Caco-2 (cell line): ENCODE measurements at regions of chr22 and their contacts with region 1.

Region 1: DNA sequence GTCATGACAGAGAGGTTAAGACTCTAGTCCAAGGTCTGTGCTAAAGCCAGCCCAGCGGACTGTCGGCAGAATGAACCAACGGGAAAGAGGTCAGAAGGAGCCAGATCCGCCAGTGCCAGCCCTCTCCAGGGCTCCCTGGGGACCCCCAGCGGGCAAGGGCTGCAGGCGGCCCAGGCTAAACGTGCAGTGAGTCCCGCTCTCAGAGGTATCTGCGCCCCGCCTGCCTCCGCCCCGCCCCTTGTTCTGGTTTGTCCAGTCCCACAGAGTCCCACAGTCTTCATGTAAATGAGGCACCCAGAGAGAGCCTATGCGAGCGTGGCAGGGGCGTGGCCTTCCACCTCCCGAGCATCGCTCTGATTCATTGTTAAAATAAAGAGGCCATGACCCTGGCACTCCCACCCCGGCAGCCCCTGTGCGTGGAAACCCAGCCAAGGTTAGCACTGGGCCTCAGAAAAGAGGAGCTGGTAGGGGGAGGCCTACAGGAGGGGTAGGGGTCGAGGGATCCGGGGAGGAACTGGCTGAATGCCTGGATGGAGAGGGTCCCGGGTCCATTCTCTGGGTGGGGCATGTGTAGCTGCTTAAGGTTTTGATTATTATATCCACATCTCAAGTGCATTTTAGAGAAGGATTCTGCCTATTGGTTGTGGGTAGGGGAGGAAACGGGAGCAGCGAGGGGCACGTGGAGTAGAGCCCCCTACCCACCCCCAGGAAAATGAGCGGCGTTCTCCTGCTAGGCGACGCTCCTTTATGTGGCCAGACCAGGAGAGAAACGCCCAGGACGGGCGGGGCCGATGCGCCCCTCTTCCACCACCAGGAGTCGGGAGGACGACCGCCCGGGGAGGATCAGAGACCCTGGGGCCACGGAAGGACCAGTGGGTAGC is at the start of gene TRIOBP:
- DNase-seq: peak; percentile 98
- H3K4me3 ChIP-seq: peak within 1 kb of the TSS; percentile 20
- H3K4me3 Mint-ChIP-seq: peak within 1 kb of the TSS; percentile 55
- H3K27ac Mint-ChIP-seq: peak within 1 kb of the TSS; percentile 62
- H3K4me1 ChIP-seq: peaks cover 13% of the 10 kb centered on the region; the same call in 1 of the 2 replicates
- H3K4me1 Mint-ChIP-seq: peaks cover 13% of the 10 kb centered on the region
- H3K27me3 ChIP-seq: no peaks in the 10 kb centered on the region
- H3K27me3 Mint-ChIP-seq: no peaks in the 10 kb centered on the region
- CTCF ChIP-seq: peak; percentile 51 to 80
- total RNA-seq, gene TRIOBP: 30.7 and 38.4 TPM in 2 replicates

Region 2: GRCh38 chr22:37676736-37677492 is 20.0 kb before region 1 on chr22:
- CTCF ChIA-PET with region 1: interaction called, 10 read pairs
- POLR2A ChIA-PET with region 1: no interaction called
- intact Hi-C with region 1: no loop called
- DNase-seq: peak; percentile 84 to 88
- H3K4me3 ChIP-seq: peak overlapping the region; percentile 53
- H3K4me3 Mint-ChIP-seq: peak overlapping the region; percentile 79
- H3K27ac Mint-ChIP-seq: peak overlapping the region; percentile 65
- H3K4me1 ChIP-seq: peaks cover 9% of the 10 kb centered on the region; the same call in 1 of the 2 replicates
- H3K4me1 Mint-ChIP-seq: peaks cover 7% of the 10 kb centered on the region
- H3K27me3 ChIP-seq: no peaks in the 10 kb centered on the region
- H3K27me3 Mint-ChIP-seq: no peaks in the 10 kb centered on the region
- CTCF ChIP-seq: no peak

Region 3: GRCh38 chr22:37686002-37686982 is 10.6 kb before region 1 on chr22 and contains the start of gene NOL12:
- CTCF ChIA-PET with region 1: interaction called, 10 read pairs
- POLR2A ChIA-PET with region 1: interaction called, 6 read pairs
- intact Hi-C with region 1: loop called (anchors 1 kb)
- DNase-seq: peak; percentile 85
- H3K4me3 ChIP-seq: peak within 1 kb of the TSS; percentile 97
- H3K4me3 Mint-ChIP-seq: peak within 1 kb of the TSS; percentile 99
- H3K27ac Mint-ChIP-seq: peak within 1 kb of the TSS; percentile 95
- H3K4me1 ChIP-seq: peaks cover 16% of the 10 kb centered on the region; the same call in 1 of the 2 replicates
- H3K4me1 Mint-ChIP-seq: no peaks in the 10 kb centered on the region
- H3K27me3 ChIP-seq: no peaks in the 10 kb centered on the region; the same call in 1 of the 2 replicates
- H3K27me3 Mint-ChIP-seq: no peaks in the 10 kb centered on the region
- CTCF ChIP-seq: no peak
- total RNA-seq, gene NOL12: 20.2 and 22.3 TPM in 2 replicates

Region 4: DNA sequence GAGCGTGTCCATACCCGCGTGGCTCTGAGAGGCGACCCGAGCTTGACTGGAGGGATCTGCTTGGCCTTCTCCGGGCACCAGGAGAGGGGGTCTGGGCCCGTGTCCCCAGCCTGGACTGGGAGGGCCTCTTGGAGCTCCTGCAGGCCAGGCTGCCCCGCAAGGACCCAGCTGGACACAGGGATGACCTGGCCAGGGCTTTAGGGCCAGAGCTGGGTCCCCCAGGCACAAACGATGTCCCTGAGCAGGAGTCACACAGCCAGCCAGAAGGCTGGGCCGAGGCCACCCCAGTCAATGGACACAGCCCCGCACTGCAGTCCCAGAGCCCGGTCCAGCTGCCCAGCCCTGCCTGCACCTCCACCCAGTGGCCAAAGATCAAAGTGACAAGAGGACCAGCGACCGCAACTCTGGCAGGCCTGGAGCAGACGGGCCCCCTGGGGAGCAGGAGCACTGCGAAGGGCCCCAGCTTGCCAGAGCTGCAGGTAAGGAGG is 38.1 kb after region 1 on chr22:
- CTCF ChIA-PET with region 1: no interaction called
- POLR2A ChIA-PET with region 1: no interaction called
- intact Hi-C with region 1: loop called (anchors 2 kb)
- DNase-seq: peak; percentile 75 to 77
- H3K4me3 ChIP-seq: no peak overlapping the region
- H3K4me3 Mint-ChIP-seq: no peak overlapping the region
- H3K27ac Mint-ChIP-seq: no peak overlapping the region
- H3K4me1 ChIP-seq: peaks cover 35% of the 10 kb centered on the region
- H3K4me1 Mint-ChIP-seq: peaks cover 13% of the 10 kb centered on the region
- H3K27me3 ChIP-seq: no peaks in the 10 kb centered on the region
- H3K27me3 Mint-ChIP-seq: no peaks in the 10 kb centered on the region
- CTCF ChIP-seq: peak; percentile 44 to 71